Transverse colon (tissue), 4 donors: ENCODE measurements at regions of chr2 and their contacts with region 1.

Region 1: DNA sequence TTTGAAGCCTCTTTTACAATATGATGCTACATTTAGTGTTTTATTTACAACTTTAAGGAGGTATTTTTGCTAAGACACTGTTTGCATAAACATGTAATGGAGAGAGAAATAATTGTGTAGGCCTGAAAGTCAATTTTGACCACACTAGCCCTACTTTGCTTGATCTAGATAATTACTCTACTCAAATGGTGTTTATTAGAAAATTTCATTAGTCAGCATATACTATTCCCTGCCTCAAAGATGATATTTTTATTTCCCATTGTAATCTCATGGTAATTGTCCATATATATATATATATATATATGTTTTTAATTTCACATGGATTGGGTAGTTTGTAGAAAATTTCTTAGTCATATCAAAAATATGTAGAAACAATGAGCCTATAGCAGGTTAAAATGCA is 632.2 kb downstream of the SATB2 start:
- DNase-seq: no peak
- H3K4me3 ChIP-seq: no peak overlapping the region
- H3K27ac ChIP-seq: no peak overlapping the region
- H3K4me1 ChIP-seq: no peaks in the 10 kb centered on the region
- H3K27me3 ChIP-seq: no peaks in the 10 kb centered on the region
- CTCF ChIP-seq: no peak
- EP300 ChIP-seq: no peak
- POLR2A ChIP-seq: no peak

Region 2: DNA sequence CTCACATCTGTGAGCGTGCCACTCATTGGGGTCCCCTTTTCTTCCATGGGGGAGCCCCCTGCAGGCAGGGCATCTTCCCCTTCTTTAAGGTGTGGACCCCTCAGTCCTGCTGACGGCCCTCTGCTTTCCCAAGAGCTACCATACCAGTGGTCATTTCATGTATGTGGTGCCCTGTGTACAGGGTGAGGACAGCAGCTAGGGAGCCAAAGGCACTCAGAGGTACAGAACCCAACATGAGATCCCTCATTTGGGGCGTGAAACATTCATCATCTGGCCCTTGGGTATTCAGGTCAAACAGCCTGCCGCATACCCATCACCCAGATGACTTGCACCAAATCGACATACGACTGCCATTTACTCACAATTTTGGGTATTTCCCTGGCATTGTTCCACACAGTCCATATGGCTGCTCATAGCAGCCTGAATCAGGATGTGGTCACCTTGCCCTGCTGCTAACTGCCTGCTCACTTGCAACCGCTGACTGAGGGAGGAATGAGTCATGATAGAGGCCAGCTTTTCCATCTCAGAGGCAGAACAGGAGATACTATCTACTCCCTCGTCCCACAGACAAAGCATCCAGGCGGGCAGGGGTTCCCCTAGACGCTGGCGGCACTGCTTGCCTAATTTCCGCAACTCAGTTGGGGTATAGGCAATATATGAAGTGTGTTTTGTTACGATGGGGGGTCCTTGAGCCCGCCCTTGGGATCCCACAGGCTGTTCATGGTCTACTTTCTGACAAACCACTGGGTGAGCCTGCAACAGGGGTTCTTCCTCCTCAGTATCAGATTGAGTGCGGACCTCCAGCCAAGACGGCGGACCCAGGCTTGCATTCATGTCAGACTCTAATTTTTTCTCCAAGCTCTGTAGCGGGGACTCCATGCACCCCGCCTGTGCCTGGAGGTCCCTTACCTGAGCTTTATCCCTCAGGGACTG is 403.6 kb after region 1 on chr2:
- in situ Hi-C with region 1: loop called in 1 of 4 experiments (anchors 25 kb)
- intact Hi-C with region 1: no loop called
- DNase-seq: no peak
- H3K4me3 ChIP-seq: no peak overlapping the region
- H3K27ac ChIP-seq: no peak overlapping the region
- H3K4me1 ChIP-seq: no peaks in the 10 kb centered on the region
- H3K27me3 ChIP-seq: no peaks in the 10 kb centered on the region
- CTCF ChIP-seq: no peak
- EP300 ChIP-seq: no peak
- POLR2A ChIP-seq: no peak